SK-N-SH (cell line): ENCODE measurements at regions of chr15 and their contacts with region 1.

Region 1: GRCh38 chr15:59688841-59689625 is at the start of gene BNIP2:
- DNase-seq: peak; percentile 96
- H3K4me3 ChIP-seq: peak within 1 kb of the TSS; percentile 81 to 86
- H3K27ac ChIP-seq: peak within 1 kb of the TSS; percentile 92 to 93
- H3K4me1 ChIP-seq: peaks cover 16 to 22% of the 10 kb centered on the region in 2 experiments; a peak in 3 of 4 replicates
- H3K27me3 ChIP-seq: no peaks in the 10 kb centered on the region
- CTCF ChIP-seq: 0 out of 2 replicates have a peak, but pooled peaks have one; percentile 6
- EP300 ChIP-seq: 0 out of 4 replicates have a peak, but pooled peaks of 1 of the 2 experiments have one; percentile 26
- RAD21 ChIP-seq: no peak
- polyA plus RNA-seq, gene BNIP2: 37.0 and 67.7 TPM in 2 replicates

Region 2: DNA sequence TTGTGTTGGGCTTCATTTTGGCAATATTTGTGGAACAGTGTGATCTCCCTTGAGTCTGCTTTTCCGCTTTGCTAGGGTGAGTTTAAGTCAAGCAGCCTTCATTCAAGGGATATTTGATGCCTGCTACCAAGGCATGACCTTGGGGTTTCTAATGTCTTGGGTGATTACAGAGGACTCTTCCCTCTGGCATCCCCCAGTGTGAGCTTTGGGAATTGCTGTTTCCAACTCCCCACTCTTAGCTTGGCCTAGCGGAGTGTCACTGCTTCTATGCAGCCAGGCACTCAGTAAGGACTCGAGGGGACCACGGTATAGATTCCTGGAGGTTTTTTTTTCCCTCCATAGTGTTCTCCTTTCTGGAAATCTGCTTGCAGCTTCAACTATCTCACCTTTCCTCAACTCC is 56.3 kb before region 1 on chr15:
- CTCF ChIA-PET with region 1: no interaction called
- POLR2A ChIA-PET with region 1: no interaction called
- DNase-seq: no peak
- H3K4me3 ChIP-seq: no peak overlapping the region
- H3K27ac ChIP-seq: no peak overlapping the region
- H3K4me1 ChIP-seq: no peaks in the 10 kb centered on the region
- H3K27me3 ChIP-seq: no peaks in the 10 kb centered on the region
- CTCF ChIP-seq: peak; percentile 35
- EP300 ChIP-seq: no peak
- RAD21 ChIP-seq: peak; percentile 32; the same call in 1 of the 2 replicates

Region 3: DNA sequence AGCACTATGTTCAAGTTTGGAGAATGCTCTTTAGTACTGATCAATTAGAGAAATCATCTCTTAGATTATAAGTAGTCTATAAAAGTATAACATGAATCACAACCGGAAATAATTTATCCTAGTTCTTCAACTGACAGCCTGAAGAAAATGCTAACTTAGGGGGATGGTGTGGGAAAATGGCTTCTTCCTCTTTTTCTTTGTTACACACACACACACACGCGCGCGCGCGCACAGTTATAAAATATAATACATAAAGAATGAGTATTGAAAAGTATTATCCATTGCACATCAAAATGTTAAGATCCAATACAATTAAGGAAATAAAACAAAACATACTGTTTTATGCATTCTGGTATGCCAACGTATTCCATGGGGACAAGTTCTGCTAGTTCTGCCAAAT is 20.5 kb before region 1 on chr15:
- CTCF ChIA-PET with region 1: no interaction called
- POLR2A ChIA-PET with region 1: no interaction called
- DNase-seq: no peak
- H3K4me3 ChIP-seq: no peak overlapping the region
- H3K27ac ChIP-seq: no peak overlapping the region
- H3K4me1 ChIP-seq: no peaks in the 10 kb centered on the region; a peak in 1 of 4 replicates
- H3K27me3 ChIP-seq: no peaks in the 10 kb centered on the region
- CTCF ChIP-seq: no peak
- EP300 ChIP-seq: no peak
- RAD21 ChIP-seq: no peak

Region 4: GRCh38 chr15:59699810-59700431 is 10.9 kb after region 1 on chr15:
- CTCF ChIA-PET with region 1: interaction called, 15 read pairs
- POLR2A ChIA-PET with region 1: no interaction called
- DNase-seq: no peak
- H3K4me3 ChIP-seq: no peak overlapping the region
- H3K27ac ChIP-seq: no peak overlapping the region
- H3K4me1 ChIP-seq: peaks cover 0 to 3% of the 10 kb centered on the region in 2 experiments; a peak in 3 of 4 replicates
- H3K27me3 ChIP-seq: 0 out of 2 replicates have a peak, but pooled peaks cover 6% of the 10 kb centered on the region
- CTCF ChIP-seq: no peak
- EP300 ChIP-seq: no peak
- RAD21 ChIP-seq: no peak

Region 5: DNA sequence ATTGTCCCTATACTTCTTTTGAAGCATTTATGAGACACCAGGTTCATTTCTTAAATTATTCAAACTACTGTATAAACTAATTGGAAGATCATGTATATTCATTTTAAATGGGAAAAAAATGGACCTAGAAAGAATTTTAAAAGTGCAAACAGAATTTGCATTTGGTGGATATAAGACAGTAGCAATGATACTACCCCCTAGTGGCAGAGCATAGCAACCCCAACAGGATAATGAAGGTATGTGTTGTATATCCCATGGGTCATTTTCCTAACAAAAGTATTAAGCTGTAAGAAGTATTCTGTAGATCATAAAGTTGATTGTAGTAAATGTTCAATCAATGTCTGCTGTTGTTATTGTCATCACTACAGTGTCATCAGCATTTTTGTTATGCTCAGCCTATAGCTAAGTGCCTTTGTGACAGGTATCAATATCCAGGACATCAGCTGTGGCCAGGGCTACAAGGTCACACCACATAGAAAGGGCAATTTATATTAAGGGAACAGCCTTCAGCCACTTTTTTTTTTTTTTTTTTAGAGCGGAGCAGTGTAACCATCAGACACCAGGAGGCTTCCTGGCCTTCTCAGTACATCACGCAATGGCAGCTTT is 490.9 kb after region 1 on chr15:
- CTCF ChIA-PET with region 1: interaction called, 19 read pairs
- POLR2A ChIA-PET with region 1: no interaction called
- DNase-seq: peak; percentile 26
- H3K4me3 ChIP-seq: no peak overlapping the region; a peak in 1 of 4 replicates
- H3K27ac ChIP-seq: no peak overlapping the region
- H3K4me1 ChIP-seq: no peaks in the 10 kb centered on the region
- H3K27me3 ChIP-seq: peaks cover 24% of the 10 kb centered on the region
- CTCF ChIP-seq: peak; percentile 88
- EP300 ChIP-seq: no peak
- RAD21 ChIP-seq: peak; percentile 60